KBM-7 (cell line): ENCODE measurements at regions of chr17 and their contacts with region 1.

Region 1: DNA sequence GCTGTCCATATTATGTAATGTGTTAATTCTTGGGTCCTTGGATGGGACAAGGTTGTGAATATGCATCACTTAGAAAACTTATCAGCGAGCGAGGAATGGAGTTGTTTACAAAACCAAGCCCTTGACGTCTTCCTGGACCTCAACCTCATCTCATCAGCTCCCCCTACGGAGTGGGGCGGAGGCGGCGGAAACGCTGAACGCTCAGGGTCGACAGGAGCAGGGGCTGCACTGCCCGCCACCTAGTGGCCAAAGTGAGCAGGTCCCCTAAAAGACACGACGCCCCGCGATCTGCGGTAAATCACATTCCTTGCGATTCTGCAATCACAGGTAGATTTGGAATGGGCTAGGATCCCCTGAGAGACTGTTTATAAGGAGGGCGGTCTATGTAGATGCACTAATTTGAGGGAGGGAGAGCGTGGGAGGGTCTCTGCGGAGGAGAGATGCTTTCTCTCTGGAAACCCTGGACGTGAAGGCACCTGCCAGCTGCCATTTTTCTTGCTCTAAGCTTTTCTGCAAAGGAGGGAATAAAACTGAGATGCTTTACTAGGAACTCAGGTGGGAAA is 5.4 kb upstream of the ICAM2 start:
- DNase-seq: peak; percentile 93

Region 2: DNA sequence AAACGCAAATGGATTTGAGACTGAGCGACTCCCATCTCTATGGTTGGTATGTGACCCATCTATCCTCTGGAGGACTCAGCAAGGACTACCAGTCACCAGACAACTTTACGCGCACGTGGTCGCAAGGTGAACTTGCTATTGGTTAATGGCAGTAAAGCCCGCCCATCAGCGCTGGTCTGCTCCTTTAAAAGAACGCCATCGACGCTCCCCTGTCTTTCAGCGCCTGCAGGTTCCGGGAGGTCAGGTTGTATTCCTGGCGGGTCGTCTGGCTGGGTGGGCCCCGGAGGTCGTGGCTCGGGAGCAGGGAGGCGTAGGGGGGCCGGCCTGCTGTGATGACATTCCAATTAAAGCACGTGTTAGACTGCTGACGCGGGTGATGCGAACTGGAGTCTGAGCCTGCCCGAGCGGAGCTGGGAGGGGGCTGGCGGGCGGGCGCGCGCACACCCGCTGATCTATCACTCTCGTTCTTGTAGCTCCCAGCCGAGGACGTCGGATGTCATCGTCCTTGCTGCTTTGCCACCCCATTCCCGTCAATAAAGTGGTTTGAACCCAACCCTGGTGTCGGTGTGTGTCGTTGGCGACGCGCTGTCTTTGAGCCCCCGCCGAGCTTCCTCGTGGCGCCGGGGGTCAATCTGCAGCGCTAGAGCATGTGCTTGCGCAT is 120.1 kb after region 1 on chr17:
- in situ Hi-C with region 1: loop called (anchors 25 kb)
- DNase-seq: peak; percentile 98